Aorta (tissue), 5 donors: ENCODE measurements at regions of chr5 and their contacts with region 1.

Region 1: GRCh38 chr5:142716963-142717362 is 31.1 kb upstream of the FGF1 start:
- DNase-seq: peak; percentile 64 to 79
- ATAC-seq: peak; percentile 44
- H3K4me3 ChIP-seq: no peak overlapping the region
- H3K27ac ChIP-seq: no peak overlapping the region
- H3K4me1 ChIP-seq: no peaks in the 10 kb centered on the region
- H3K27me3 ChIP-seq: no peaks in the 10 kb centered on the region

Region 2: DNA sequence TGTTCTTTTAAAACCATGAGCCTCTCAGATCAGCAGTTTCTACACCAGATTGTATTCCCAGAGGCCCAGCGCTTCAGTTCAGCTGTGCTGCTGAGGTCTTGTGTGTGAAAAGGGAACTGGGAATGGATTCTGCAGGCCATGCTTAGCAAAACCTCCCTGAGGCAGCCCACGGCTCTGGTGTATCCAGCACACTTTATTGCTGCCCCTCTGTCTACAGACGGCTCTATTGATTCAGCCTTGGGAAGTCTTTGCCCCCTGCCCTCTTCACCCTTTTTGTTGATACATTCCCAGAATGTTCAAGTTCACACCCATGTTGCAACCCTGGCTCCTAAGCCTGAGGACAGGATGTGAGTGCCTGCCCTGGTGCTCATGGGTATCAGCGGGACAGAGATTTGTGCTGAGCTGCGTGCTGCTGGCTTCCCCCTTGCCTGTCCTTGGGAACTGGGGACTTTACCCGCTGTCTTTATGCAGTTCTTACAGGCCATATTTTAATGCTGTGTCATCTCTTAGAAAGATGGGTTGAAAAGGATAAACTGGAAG is 90.5 kb after region 1 on chr5:
- intact Hi-C with region 1: no loop called
- DNase-seq: peak in 1 of 2 donors; percentile 71
- ATAC-seq: no peak
- H3K4me3 ChIP-seq: no peak overlapping the region
- H3K27ac ChIP-seq: no peak overlapping the region
- H3K4me1 ChIP-seq: peaks cover 2 to 13% of the 10 kb centered on the region in 2 donors
- H3K27me3 ChIP-seq: no peaks in the 10 kb centered on the region

Region 3: DNA sequence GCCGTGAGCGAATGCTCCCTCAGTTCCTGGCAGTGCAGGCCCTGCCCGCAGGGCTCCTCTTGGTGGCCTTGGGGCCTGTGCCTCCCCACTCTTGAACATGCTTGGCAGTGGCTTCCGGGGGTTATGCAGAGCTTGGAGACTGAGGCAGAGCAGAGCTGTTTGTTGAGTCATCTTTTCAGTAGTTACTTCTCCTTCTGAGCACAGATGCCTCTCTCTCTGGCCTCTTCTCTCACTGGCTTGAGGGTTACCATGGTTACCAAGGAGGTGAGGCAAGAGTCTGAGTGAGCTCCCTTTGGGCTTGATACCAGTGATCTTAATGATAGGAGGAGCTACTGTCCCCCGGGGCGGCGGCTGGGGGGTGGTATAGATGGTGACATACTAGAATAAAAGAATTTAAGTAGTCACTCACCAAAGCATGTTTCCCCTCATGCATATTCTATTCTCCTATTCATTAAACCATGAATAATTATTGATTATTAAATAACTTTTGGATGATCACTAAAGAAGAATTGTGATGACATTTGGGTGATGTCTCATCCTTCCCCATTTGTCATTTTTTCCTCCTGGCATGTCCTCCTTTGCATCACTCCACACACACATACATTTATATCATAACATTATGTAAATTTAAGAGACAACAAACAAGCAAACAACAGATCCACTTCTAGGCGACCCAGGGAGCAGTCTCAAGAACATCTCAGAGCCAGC is 164.3 kb after region 1 on chr5:
- intact Hi-C with region 1: loop called (anchors 2 kb)
- DNase-seq: no peak
- ATAC-seq: peak; percentile 29
- H3K4me3 ChIP-seq: no peak overlapping the region
- H3K27ac ChIP-seq: peak overlapping the region in 1 of 2 donors; percentile 30
- H3K4me1 ChIP-seq: peaks cover 5 to 16% of the 10 kb centered on the region in 2 donors
- H3K27me3 ChIP-seq: no peaks in the 10 kb centered on the region